Left lung (tissue), 14 donors: ENCODE measurements at regions of chr9 and their contacts with region 1.

Region 1: GRCh38 chr9:121992571-121993212 is 100.4 kb downstream of the TTLL11 start:
- DNase-seq: peak in 2 of 4 donors; percentile 73 to 81
- ATAC-seq: peak; percentile 93
- H3K4me3 ChIP-seq: no peak overlapping the region
- H3K27ac ChIP-seq: no peak overlapping the region
- H3K4me1 ChIP-seq: no peaks in the 10 kb centered on the region
- H3K27me3 ChIP-seq: no peaks in the 10 kb centered on the region
- CTCF ChIP-seq: peak; percentile 80 to 88

Region 2: GRCh38 chr9:121686930-121687541 is 305.7 kb before region 1 on chr9:
- intact Hi-C with region 1: loop called in 1 of 2 experiments (anchors 5 kb)
- DNase-seq: peak; percentile 47 to 82 (median 71)
- ATAC-seq: peak; percentile 91
- H3K4me3 ChIP-seq: no peak overlapping the region
- H3K27ac ChIP-seq: no peak overlapping the region
- H3K4me1 ChIP-seq: peaks cover 0 to 3% of the 10 kb centered on the region in 2 donors
- H3K27me3 ChIP-seq: no peaks in the 10 kb centered on the region
- CTCF ChIP-seq: peak; percentile 82 to 86